ENCODE measurements at regions of chr22 and their contacts with region 1.

Region 1: GRCh38 chr22:24067587-24068376 is 56.7 kb downstream of the CABIN1 start:
- DNase-seq: peak; percentile 51

Region 2: DNA sequence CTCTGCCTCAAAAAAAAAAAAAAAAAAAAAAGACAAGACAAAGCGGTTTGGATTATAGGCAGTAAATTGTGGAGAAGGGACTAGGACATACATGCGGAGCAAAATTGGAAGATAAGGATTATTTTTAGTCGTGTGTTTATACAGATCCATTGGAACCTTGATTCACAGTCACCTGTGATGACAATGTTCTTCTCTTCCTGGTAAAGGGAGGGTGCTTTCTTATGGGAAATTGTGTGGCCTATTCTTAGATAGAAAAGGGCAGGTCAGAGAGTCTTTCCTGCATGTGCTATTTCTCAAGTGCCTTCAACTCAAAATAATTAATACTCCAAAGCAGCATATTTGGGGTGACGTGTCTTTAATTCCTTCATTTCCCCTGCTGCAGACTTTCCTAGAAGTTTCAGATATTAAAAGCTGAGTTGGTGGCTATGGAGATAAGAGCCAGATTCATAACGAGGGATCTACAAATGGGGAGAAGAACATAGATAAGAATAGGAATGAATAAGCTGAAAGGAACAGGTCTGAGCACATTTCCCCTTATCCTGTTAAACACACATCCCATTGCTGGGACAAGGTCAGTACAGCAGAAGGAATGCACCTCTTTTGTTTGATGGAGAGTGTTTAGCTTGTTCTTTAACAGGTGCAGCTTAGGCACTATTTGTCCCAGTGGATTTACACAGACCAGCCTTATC is 129.3 kb before region 1 on chr22:
- intact Hi-C with region 1: no loop called
- DNase-seq: no peak

Region 3: GRCh38 chr22:24106385-24107381 is 38.9 kb after region 1 on chr22:
- intact Hi-C with region 1: no loop called
- DNase-seq: no peak

Region 4: DNA sequence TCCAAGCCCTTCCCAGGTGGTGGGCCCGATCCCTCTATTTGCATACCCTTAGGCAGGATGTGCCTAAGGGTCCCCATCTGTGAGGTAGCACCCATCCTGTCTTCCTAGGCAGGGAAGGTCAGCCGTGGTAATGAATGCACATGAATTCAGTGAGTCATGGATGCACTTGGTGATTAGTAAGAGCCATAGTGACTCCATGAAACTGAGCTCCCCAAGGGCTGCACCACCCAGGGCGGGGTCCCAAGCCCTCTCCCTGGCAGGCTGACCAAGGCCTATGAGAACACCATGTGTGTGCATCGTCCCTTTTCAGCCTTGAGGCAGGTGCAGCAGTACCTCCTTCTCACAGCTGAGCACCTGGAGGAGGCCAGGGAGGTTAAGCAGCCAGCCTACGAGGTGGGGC is 97.9 kb after region 1 on chr22:
- intact Hi-C with region 1: loop called (anchors 5 kb)
- DNase-seq: no peak